CD4-positive, alpha-beta memory T cell (primary cell): ENCODE measurements at regions of chr14 and their contacts with region 1.

Region 1: GRCh38 chr14:72516936-72517700 is 376.8 kb downstream of the DPF3 start:
- DNase-seq: peak; percentile 70 to 76 (median 75)
- H3K4me3 ChIP-seq: no peak overlapping the region
- H3K4me3 Mint-ChIP-seq: peak overlapping the region in 5 of 8 donors; percentile 2 to 78 (median 33)
- H3K27ac ChIP-seq: no peak overlapping the region
- H3K27ac Mint-ChIP-seq: peak overlapping the region in 3 of 7 donors; percentile 42 to 65 (median 51)
- H3K4me1 ChIP-seq: peaks cover 34% of the 10 kb centered on the region
- H3K4me1 Mint-ChIP-seq: peaks cover 31 to 55% (median 39%) of the 10 kb centered on the region in 4 donors
- H3K27me3 ChIP-seq: no peaks in the 10 kb centered on the region
- H3K27me3 Mint-ChIP-seq: no peaks in the 10 kb centered on the region

Region 2: DNA sequence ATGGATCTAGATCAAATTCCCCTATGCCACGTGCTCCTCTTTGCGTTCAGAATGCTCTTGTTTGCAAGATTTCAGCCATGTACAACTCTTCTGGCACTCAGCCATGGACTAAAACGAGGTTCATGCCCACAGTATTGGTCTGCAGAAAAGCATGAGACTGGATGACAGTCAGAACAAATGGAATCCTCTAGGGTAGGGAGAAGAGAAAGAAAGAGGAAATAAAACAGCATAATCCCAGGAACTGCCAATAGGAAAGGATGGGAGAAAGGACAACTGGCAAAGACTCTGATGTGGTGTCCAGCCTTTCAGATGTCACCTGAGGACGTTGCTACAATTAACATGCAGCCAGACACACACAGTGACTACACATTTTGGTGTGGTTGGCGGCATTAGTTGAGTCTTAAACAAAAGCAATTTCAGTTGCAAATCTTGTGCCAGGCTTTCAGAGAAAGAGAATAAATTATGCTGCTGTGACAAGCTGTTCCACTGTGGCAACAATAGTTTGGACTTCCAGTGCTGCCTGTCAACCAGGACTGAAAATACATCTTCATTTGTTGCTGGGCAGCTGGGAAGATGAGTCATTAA is 246.9 kb before region 1 on chr14:
- CTCF ChIA-PET with region 1: no interaction called
- POLR2A ChIA-PET with region 1: no interaction called
- intact Hi-C with region 1: no loop called
- DNase-seq: no peak
- H3K4me3 ChIP-seq: no peak overlapping the region
- H3K4me3 Mint-ChIP-seq: no peak overlapping the region
- H3K27ac ChIP-seq: no peak overlapping the region
- H3K27ac Mint-ChIP-seq: no peak overlapping the region
- H3K4me1 ChIP-seq: no peaks in the 10 kb centered on the region
- H3K4me1 Mint-ChIP-seq: no peaks in the 10 kb centered on the region
- H3K27me3 ChIP-seq: no peaks in the 10 kb centered on the region
- H3K27me3 Mint-ChIP-seq: peaks cover 21% of the 10 kb centered on the region in 2 donors

Region 3: GRCh38 chr14:72503696-72504368 is 13.3 kb before region 1 on chr14:
- CTCF ChIA-PET with region 1: interaction called, 10 read pairs
- POLR2A ChIA-PET with region 1: no interaction called
- intact Hi-C with region 1: no loop called
- DNase-seq: no peak
- H3K4me3 ChIP-seq: no peak overlapping the region
- H3K4me3 Mint-ChIP-seq: no peak overlapping the region
- H3K27ac ChIP-seq: no peak overlapping the region
- H3K27ac Mint-ChIP-seq: no peak overlapping the region
- H3K4me1 ChIP-seq: no peaks in the 10 kb centered on the region
- H3K4me1 Mint-ChIP-seq: no peaks in the 10 kb centered on the region
- H3K27me3 ChIP-seq: no peaks in the 10 kb centered on the region
- H3K27me3 Mint-ChIP-seq: no peaks in the 10 kb centered on the region

Region 4: DNA sequence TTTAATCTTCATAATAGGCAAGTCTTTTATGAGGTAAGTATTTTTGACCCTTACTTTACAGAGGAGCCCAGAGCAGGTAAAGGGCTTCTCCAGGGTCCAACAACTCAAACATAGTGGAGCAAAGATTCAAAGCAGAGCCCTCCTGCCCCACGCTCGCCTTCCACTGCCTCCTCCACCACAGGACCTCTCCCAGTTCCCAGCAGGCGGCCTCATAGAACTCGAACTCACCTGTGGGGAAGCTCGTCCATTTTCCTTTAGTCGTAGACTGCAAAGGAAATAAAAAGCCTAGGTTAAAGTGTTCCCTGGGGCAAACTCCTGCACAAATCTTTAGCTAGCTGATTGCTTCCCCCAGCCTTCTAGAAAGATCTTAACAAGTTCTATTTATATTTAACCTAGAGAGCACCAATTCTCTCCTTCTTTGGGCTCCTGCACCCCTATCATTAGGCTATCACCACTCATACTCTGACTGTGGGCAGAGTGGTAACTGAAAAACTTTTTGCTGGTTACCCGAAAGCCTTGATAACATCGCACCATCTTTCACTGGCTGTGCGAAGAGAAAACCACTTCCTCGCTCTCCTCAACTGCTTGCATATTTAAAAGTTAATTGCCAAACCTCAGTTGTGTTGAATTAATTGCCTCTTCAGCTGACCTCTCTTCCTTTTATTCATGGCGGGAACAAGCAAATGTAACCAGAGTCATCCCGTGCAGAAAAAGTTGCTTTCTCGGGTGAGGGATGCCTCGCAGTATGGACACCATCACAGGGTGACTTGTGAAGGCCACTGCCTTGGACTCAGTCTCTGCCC is 77.2 kb after region 1 on chr14:
- CTCF ChIA-PET with region 1: interaction called, 3 read pairs
- POLR2A ChIA-PET with region 1: no interaction called
- intact Hi-C with region 1: loop called (anchors 1 kb)
- DNase-seq: peak; percentile 62 to 72 (median 67)
- H3K4me3 ChIP-seq: no peak overlapping the region
- H3K4me3 Mint-ChIP-seq: peak overlapping the region in 7 of 8 donors; percentile 22 to 78 (median 62)
- H3K27ac ChIP-seq: no peak overlapping the region
- H3K27ac Mint-ChIP-seq: peak overlapping the region; percentile 3 to 71 (median 54)
- H3K4me1 ChIP-seq: peaks cover 60% of the 10 kb centered on the region
- H3K4me1 Mint-ChIP-seq: peaks cover 37 to 68% (median 52%) of the 10 kb centered on the region in 4 donors
- H3K27me3 ChIP-seq: no peaks in the 10 kb centered on the region
- H3K27me3 Mint-ChIP-seq: peaks cover 0 to 3% of the 10 kb centered on the region in 2 donors

Region 5: GRCh38 chr14:72608391-72609204 is 91.5 kb after region 1 on chr14:
- CTCF ChIA-PET with region 1: no interaction called
- POLR2A ChIA-PET with region 1: no interaction called
- intact Hi-C with region 1: no loop called
- DNase-seq: no peak
- H3K4me3 ChIP-seq: no peak overlapping the region
- H3K4me3 Mint-ChIP-seq: no peak overlapping the region
- H3K27ac ChIP-seq: no peak overlapping the region
- H3K27ac Mint-ChIP-seq: no peak overlapping the region
- H3K4me1 ChIP-seq: no peaks in the 10 kb centered on the region
- H3K4me1 Mint-ChIP-seq: peaks cover 0 to 2% (median 0%) of the 10 kb centered on the region in 4 donors
- H3K27me3 ChIP-seq: no peaks in the 10 kb centered on the region
- H3K27me3 Mint-ChIP-seq: peaks cover 2 to 4% of the 10 kb centered on the region in 2 donors

Region 6: DNA sequence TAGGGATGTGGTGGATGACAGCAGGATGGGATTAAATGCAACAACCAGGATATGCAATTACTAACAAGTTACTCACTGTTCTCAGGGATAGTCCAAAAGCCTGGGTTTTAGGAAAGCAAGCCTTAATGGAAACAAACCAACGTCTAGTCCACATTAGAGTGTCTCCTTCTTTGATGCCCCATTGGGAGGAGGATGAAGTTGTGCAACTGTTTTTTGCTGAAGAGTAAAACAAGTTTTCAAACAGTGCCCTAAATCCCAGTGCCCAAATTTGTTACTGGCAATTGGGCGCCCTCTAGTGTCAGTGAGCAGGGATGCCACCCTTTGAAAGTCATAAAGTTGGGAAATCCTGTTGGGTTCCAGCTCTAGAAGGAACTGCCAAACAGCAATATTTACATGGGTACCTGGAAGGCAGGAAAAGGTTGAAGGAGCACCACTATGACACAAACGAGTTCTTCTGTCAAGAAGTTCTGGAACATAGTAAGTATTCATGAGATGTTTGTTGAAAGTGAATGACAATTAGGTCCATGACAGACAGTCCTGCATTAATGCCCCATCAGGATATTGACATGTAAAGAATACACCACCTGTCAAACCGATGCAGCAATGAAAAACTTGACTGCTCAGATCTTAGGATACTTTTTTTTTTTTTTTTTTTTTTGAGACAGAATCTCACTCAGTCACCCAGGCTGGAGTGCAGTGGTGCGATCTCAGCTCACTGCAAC is 387.9 kb after region 1 on chr14:
- CTCF ChIA-PET with region 1: interaction called, 264 read pairs
- POLR2A ChIA-PET with region 1: interaction called, 7 read pairs
- intact Hi-C with region 1: loop called (anchors 1 kb)
- DNase-seq: peak; percentile 57 to 72 (median 65)
- H3K4me3 ChIP-seq: no peak overlapping the region
- H3K4me3 Mint-ChIP-seq: no peak overlapping the region
- H3K27ac ChIP-seq: no peak overlapping the region
- H3K27ac Mint-ChIP-seq: peak overlapping the region in 2 of 7 donors; percentile 4 to 58
- H3K4me1 ChIP-seq: no peaks in the 10 kb centered on the region
- H3K4me1 Mint-ChIP-seq: peaks cover 0 to 6% (median 3%) of the 10 kb centered on the region in 4 donors
- H3K27me3 ChIP-seq: no peaks in the 10 kb centered on the region
- H3K27me3 Mint-ChIP-seq: peaks cover 0 to 8% of the 10 kb centered on the region in 2 donors

Region 7: GRCh38 chr14:73472185-73473114 is 955.3 kb after region 1 on chr14:
- CTCF ChIA-PET with region 1: interaction called, 7 read pairs
- POLR2A ChIA-PET with region 1: no interaction called
- intact Hi-C with region 1: loop called (anchors 5 kb)
- DNase-seq: peak in 4 of 5 donors; percentile 55 to 66 (median 58)
- H3K4me3 ChIP-seq: no peak overlapping the region
- H3K4me3 Mint-ChIP-seq: no peak overlapping the region
- H3K27ac ChIP-seq: no peak overlapping the region
- H3K27ac Mint-ChIP-seq: no peak overlapping the region
- H3K4me1 ChIP-seq: peaks cover 4% of the 10 kb centered on the region
- H3K4me1 Mint-ChIP-seq: peaks cover 2 to 7% (median 4%) of the 10 kb centered on the region in 4 donors
- H3K27me3 ChIP-seq: no peaks in the 10 kb centered on the region
- H3K27me3 Mint-ChIP-seq: no peaks in the 10 kb centered on the region